Calu3 (cell line): ENCODE measurements at regions of chr2 and their contacts with region 1.

Region 1: GRCh38 chr2:28594289-28595108 is 98.6 kb downstream of the PLB1 start:
- DNase-seq: peak; percentile 94
- H3K4me3 Mint-ChIP-seq: peak overlapping the region; percentile 33
- H3K27ac Mint-ChIP-seq: peak overlapping the region; percentile 98
- H3K4me1 Mint-ChIP-seq: peaks cover 36% of the 10 kb centered on the region
- H3K27me3 Mint-ChIP-seq: no peaks in the 10 kb centered on the region
- CTCF ChIP-seq: peak; percentile 78

Region 2: GRCh38 chr2:28566521-28567041 is 27.9 kb before region 1 on chr2:
- CTCF ChIA-PET with region 1: interaction called, 20 read pairs
- intact Hi-C with region 1: no loop called
- DNase-seq: peak; percentile 93
- H3K4me3 Mint-ChIP-seq: peak overlapping the region; percentile 75
- H3K27ac Mint-ChIP-seq: peak overlapping the region; percentile 26
- H3K4me1 Mint-ChIP-seq: no peaks in the 10 kb centered on the region
- H3K27me3 Mint-ChIP-seq: no peaks in the 10 kb centered on the region
- CTCF ChIP-seq: peak; percentile 99

Region 3: GRCh38 chr2:28610583-28611201 is 16.2 kb after region 1 on chr2:
- CTCF ChIA-PET with region 1: interaction called, 6 read pairs
- intact Hi-C with region 1: loop called (anchors 1 kb)
- DNase-seq: peak; percentile 87
- H3K4me3 Mint-ChIP-seq: no peak overlapping the region
- H3K27ac Mint-ChIP-seq: peak overlapping the region; percentile 94
- H3K4me1 Mint-ChIP-seq: peaks cover 20% of the 10 kb centered on the region
- H3K27me3 Mint-ChIP-seq: no peaks in the 10 kb centered on the region
- CTCF ChIP-seq: no peak

Region 4: DNA sequence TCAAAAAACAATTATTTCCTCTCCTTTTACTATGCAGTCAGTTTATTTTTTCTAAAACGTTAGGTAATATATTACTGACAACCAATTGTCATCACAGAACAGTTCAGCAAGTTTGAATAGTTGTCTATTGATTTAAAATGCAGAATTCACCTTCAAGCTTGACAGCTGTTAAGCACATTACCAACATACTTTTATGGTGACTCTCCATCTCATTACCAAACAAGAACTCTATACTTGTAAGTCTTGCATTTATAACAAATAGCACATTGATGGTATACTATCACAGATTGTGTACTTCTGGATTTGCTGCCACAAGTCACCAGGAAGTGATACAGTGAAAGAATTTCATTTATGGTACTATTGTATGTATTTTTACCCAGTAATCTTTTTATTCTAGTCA is 57.7 kb after region 1 on chr2:
- CTCF ChIA-PET with region 1: interaction called, 4 read pairs
- intact Hi-C with region 1: loop called (anchors 2 kb)
- DNase-seq: no peak
- H3K4me3 Mint-ChIP-seq: no peak overlapping the region
- H3K27ac Mint-ChIP-seq: peak overlapping the region; percentile 66
- H3K4me1 Mint-ChIP-seq: peaks cover 78% of the 10 kb centered on the region
- H3K27me3 Mint-ChIP-seq: no peaks in the 10 kb centered on the region
- CTCF ChIP-seq: no peak

Region 5: DNA sequence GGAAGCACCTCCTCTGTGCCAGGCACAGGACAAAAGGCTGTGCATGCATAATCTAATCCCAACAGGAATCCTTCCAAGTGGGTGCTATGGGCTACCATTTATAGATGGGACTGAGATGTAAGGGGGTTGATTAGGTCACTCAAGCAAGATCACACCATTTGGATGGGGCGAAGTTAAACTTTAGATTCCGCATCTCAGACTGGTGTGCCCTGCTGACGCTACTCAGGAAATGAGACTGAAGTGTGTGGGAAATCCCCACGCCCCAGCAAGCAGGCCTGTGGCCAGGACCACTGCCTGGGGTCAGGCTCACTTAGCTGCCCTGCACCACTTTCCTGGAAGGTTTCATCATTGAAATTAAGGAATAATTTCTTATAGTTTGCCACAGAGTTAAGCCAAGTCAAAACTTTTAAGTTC is 86.7 kb after region 1 on chr2:
- CTCF ChIA-PET with region 1: no interaction called
- intact Hi-C with region 1: no loop called
- DNase-seq: peak; percentile 26
- H3K4me3 Mint-ChIP-seq: no peak overlapping the region
- H3K27ac Mint-ChIP-seq: no peak overlapping the region
- H3K4me1 Mint-ChIP-seq: peaks cover 30% of the 10 kb centered on the region
- H3K27me3 Mint-ChIP-seq: no peaks in the 10 kb centered on the region
- CTCF ChIP-seq: no peak

Region 6: GRCh38 chr2:28751252-28751955 is 156.9 kb after region 1 on chr2 and contains the start of gene PPP1CB:
- CTCF ChIA-PET with region 1: interaction called, 33 read pairs
- intact Hi-C with region 1: loop called (anchors 1 kb)
- DNase-seq: peak; percentile 96
- H3K4me3 Mint-ChIP-seq: peak within 1 kb of the TSS; percentile 93
- H3K27ac Mint-ChIP-seq: peak within 1 kb of the TSS; percentile 97
- H3K4me1 Mint-ChIP-seq: peaks cover 39% of the 10 kb centered on the region
- H3K27me3 Mint-ChIP-seq: no peaks in the 10 kb centered on the region
- CTCF ChIP-seq: no peak
- total RNA-seq, gene PPP1CB: 218 and 235 TPM in 2 replicates

Region 7: DNA sequence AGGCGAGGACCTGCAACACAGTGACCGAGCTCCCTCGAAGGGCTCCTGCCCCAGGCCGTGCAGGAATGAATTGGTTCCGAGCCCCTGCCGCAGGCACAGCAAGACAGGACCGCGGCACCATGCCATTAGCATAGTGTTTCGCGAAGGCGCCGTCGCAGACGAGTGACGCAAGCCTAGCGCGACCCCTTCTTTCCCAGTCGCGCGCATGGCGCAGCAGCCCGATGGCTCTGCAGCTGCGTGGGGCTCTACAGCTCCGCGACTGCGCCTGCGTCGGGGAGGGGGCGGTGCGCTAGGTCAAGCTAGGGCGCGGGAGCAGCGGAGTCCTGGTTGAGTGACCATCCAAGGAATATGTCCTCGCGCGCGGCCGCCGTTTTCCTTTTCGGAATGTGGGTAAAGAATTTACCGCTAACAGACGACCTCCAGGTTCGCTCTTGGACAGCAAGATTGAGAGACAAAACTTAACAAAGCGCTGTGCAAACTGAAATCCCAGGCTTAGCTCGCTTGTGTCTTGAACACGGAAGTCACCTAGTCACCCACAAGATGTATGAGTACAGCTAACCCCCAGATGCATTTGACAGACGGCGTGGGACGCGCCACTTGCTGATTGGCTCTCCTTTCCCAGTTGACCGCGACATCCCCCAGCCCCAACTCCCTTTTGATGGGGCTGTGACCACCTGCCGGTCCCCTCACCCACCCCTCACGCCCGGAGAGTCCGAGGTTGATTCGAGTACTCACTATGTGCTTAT is 275.8 kb after region 1 on chr2 and contains the start of gene TRMT61B:
- CTCF ChIA-PET with region 1: no interaction called
- intact Hi-C with region 1: no loop called
- DNase-seq: peak; percentile 95
- H3K4me3 Mint-ChIP-seq: peak within 1 kb of the TSS; percentile 92
- H3K27ac Mint-ChIP-seq: peak within 1 kb of the TSS; percentile 67
- H3K4me1 Mint-ChIP-seq: peaks cover 13% of the 10 kb centered on the region
- H3K27me3 Mint-ChIP-seq: peaks cover 7% of the 10 kb centered on the region
- CTCF ChIP-seq: no peak
- total RNA-seq, gene TRMT61B: 17.0 and 18.1 TPM in 2 replicates

Region 8: DNA sequence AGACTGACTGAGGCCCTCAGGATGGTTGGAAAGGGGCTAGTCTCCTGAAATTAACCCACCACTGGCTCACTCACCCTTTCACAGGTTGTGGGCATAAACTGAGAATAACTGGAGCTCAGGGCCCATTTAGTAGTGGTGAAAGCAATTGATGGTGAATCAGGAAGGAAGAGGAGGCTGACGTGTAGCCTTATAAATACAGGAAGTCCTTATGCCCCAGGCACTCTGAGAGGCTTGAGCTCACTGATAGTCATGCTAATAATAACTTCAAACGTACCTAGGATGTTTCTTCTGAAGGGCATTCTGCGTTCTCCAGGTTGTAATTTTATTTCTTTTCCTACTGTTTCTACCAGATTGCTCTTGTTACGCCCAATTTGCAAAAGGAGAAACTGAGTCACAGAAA is 849.1 kb after region 1 on chr2:
- CTCF ChIA-PET with region 1: no interaction called
- intact Hi-C with region 1: no loop called
- DNase-seq: no peak
- H3K4me3 Mint-ChIP-seq: no peak overlapping the region
- H3K27ac Mint-ChIP-seq: no peak overlapping the region
- H3K4me1 Mint-ChIP-seq: no peaks in the 10 kb centered on the region
- H3K27me3 Mint-ChIP-seq: peaks cover 87% of the 10 kb centered on the region
- CTCF ChIP-seq: no peak